Esophagus squamous epithelium (tissue), 5 donors: ENCODE measurements at regions of chr5 and their contacts with region 1.

Region 1: GRCh38 chr5:73303148-73304079 is 130.4 kb downstream of the TMEM174 start:
- DNase-seq: no peak
- H3K4me3 ChIP-seq: peak overlapping the region; percentile 14 to 51 (median 29)
- H3K27ac ChIP-seq: no peak overlapping the region
- H3K4me1 ChIP-seq: peaks cover 17 to 43% (median 22%) of the 10 kb centered on the region in 3 donors
- H3K27me3 ChIP-seq: peaks cover 25 to 98% (median 47%) of the 10 kb centered on the region in 4 donors
- CTCF ChIP-seq: peak in 1 of 6 experiments; percentile 33
- POLR2A ChIP-seq: no peak

Region 2: DNA sequence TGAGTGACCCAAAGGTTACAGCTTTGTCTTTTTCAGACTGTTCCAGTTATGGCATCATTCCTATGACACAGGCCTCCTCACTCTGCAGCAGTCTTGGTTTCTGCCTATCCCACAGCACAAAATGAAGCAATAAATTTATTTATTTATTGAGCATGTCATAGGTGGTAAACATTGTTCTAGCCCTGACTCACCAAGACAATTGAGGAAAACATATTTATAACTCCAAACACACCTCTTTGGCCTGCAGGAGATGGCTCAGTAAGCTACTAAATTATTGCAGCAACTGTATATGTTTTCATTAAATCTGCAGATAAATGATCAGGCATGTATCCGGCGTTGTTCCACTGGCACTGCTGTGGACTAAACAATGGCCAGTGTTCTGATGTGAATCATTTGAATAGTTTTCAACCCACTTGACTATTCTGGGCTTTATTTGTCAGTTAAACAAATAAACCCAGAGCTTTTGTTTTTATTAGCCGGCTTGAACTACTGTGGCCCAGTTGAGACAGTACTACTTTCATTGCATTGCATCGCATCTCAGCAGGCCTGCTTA is 62.0 kb after region 1 on chr5:
- intact Hi-C with region 1: no loop called
- DNase-seq: no peak
- H3K4me3 ChIP-seq: no peak overlapping the region
- H3K27ac ChIP-seq: no peak overlapping the region
- H3K4me1 ChIP-seq: peaks cover 0 to 11% (median 0%) of the 10 kb centered on the region in 3 donors
- H3K27me3 ChIP-seq: peaks cover 0 to 10% (median 0%) of the 10 kb centered on the region in 4 donors
- CTCF ChIP-seq: no peak
- POLR2A ChIP-seq: no peak

Region 3: GRCh38 chr5:73448463-73449136 is 145.2 kb after region 1 on chr5 and contains the start of gene FOXD1:
- intact Hi-C with region 1: loop called (anchors 10 kb)
- DNase-seq: peak; percentile 10
- H3K4me3 ChIP-seq: peak within 1 kb of the TSS; percentile 39 to 77 (median 52)
- H3K27ac ChIP-seq: peak within 1 kb of the TSS; percentile 72 to 89 (median 79)
- H3K4me1 ChIP-seq: peaks cover 18 to 55% (median 23%) of the 10 kb centered on the region in 3 donors
- H3K27me3 ChIP-seq: peaks cover 25 to 99% (median 55%) of the 10 kb centered on the region in 4 donors
- CTCF ChIP-seq: peak in 1 of 6 experiments; percentile 6
- POLR2A ChIP-seq: peak in 2 of 4 donors; percentile 74 to 83
- total RNA-seq, gene FOXD1: 0.48 to 3.5 (median 1.5) TPM in 3 of 4 donors, not detected in the other

Region 4: GRCh38 chr5:73498057-73499008 is 194.9 kb after region 1 on chr5 and contains the start of gene BTF3:
- intact Hi-C with region 1: no loop called
- DNase-seq: peak; percentile 79
- H3K4me3 ChIP-seq: peak within 1 kb of the TSS; percentile 85 to 97 (median 93)
- H3K27ac ChIP-seq: peak within 1 kb of the TSS; percentile 96 to 100 (median 99)
- H3K4me1 ChIP-seq: peaks cover 3 to 50% (median 11%) of the 10 kb centered on the region in 3 donors
- H3K27me3 ChIP-seq: no peaks in the 10 kb centered on the region
- CTCF ChIP-seq: peak in 1 of 6 experiments; percentile 4
- POLR2A ChIP-seq: peak in 3 of 4 donors; percentile 10 to 82 (median 57)
- total RNA-seq, gene BTF3: 467 to 654 (median 574) TPM

Region 5: GRCh38 chr5:74232281-74232680 is 928.9 kb after region 1 on chr5:
- intact Hi-C with region 1: no loop called
- DNase-seq: no peak
- H3K4me3 ChIP-seq: no peak overlapping the region
- H3K27ac ChIP-seq: no peak overlapping the region
- H3K4me1 ChIP-seq: no peaks in the 10 kb centered on the region
- H3K27me3 ChIP-seq: no peaks in the 10 kb centered on the region
- CTCF ChIP-seq: no peak
- POLR2A ChIP-seq: no peak